K562 (cell line): ENCODE measurements at regions of chr7 and their contacts with region 1.

Region 1: DNA sequence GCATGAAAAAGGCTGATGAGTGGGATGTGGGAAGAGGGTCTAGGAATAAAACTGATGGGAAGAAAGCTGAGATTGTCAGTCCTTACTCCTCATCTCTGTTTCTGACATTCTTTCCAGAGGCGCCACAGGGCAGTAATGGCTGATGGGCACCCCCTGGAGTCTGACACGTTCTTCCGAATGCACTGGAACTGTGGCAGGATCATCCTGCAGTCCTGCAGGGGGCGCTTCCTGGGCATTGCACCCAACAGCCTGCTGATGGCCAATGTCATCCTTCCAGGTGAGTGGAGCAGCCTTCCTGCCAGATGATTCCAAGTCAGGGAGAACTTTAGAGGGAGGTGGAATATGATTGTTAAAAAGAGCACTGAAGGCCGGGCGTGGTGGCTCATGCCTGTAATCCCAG is 4.8 kb downstream of the FSCN3 start:
- DNase-seq: peak; percentile 58 to 68 (median 63)
- ATAC-seq: peak; percentile 85
- H3K4me3 ChIP-seq: no peak overlapping the region
- H3K27ac ChIP-seq: no peak overlapping the region
- H3K4me1 ChIP-seq: no peaks in the 10 kb centered on the region; a peak in 1 of 5 replicates
- H3K27me3 ChIP-seq: peaks cover 47 to 75% of the 10 kb centered on the region in 2 experiments
- CTCF ChIP-seq: peak; percentile 75 to 98 (median 93)
- EP300 ChIP-seq: no peak
- POLR2A ChIP-seq: no peak
- RAD21 ChIP-seq: peak in 1 of 2 experiments; percentile 59; a peak in 2 of 4 replicates

Region 2: GRCh38 chr7:127585044-127585953 is 13.0 kb before region 1 on chr7 and contains the start of gene GCC1:
- CTCF ChIA-PET with region 1: no interaction called
- POLR2A ChIA-PET with region 1: interaction called, 11 read pairs
- in situ Hi-C with region 1: no loop called
- intact Hi-C with region 1: no loop called
- DNase-seq: peak; percentile 97 to 99 (median 98)
- ATAC-seq: peak; percentile 84
- H3K4me3 ChIP-seq: peak within 1 kb of the TSS; percentile 86
- H3K27ac ChIP-seq: peak within 1 kb of the TSS; percentile 58
- H3K4me1 ChIP-seq: peaks cover 28 to 49% of the 10 kb centered on the region in 2 experiments; a peak in 4 of 5 replicates
- H3K27me3 ChIP-seq: no peaks in the 10 kb centered on the region
- CTCF ChIP-seq: no peak
- EP300 ChIP-seq: no peak
- POLR2A ChIP-seq: peak; percentile 95
- RAD21 ChIP-seq: no peak
- polyA plus RNA-seq, gene GCC1: 1.9 to 2.3 TPM

Region 3: DNA sequence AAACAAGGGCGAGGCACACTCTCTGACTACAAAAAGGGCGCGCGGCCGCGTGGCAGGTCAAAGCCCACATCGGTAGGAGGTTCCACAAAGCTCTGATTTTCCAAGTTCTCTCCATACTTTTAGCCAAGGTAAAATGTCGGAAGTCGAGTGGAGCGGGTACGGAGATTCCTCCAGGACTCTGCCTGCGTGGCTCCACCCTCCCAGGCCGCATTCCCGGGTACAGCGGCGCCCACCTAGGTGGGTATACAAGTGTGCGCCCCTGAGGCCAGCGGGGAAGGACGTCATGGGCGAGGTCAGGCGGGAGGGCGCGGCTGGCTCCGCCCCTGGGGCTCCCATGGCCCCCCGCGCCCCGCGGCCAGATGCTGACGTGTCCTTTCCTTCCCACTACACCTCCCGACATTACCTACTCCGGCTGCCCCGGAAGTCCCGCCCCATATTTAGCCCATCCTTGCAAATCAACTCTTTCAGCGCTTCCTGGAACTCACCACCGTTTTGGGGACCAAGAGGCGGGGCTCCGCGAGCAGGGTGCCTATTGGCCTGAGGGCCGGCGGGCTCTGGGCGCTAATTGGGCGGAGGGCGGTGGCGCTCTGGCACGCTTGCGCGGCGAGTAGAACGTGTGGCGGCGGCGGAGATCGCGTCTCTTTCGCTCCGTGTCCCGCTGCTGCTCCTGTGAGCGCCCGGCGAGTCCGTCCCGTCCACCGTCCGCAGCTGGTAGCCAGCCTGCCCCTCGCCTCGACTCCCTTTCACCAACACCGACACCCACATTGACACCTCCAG is 53.4 kb after region 1 on chr7 and contains the start of gene SND1:
- CTCF ChIA-PET with region 1: no interaction called
- POLR2A ChIA-PET with region 1: no interaction called
- in situ Hi-C with region 1: no loop called
- intact Hi-C with region 1: no loop called
- DNase-seq: peak; percentile 99 to 100 (median 100)
- ATAC-seq: peak; percentile 96
- H3K4me3 ChIP-seq: peak within 1 kb of the TSS; percentile 86
- H3K27ac ChIP-seq: peak within 1 kb of the TSS; percentile 90
- H3K4me1 ChIP-seq: peaks cover 17 to 58% of the 10 kb centered on the region in 2 experiments
- H3K27me3 ChIP-seq: no peaks in the 10 kb centered on the region
- CTCF ChIP-seq: peak in 1 of 3 experiments; percentile 3; a peak in 1 of 6 replicates
- EP300 ChIP-seq: no peak
- POLR2A ChIP-seq: peak; percentile 98
- RAD21 ChIP-seq: no peak; a peak in 1 of 4 replicates
- polyA plus RNA-seq, gene SND1: 46.5 to 87.6 TPM